A549 (cell line): ENCODE measurements at regions of chr7 and their contacts with region 1.

Region 1: GRCh38 chr7:95545078-95545498 is 51.2 kb downstream of the PDK4 start:
- DNase-seq: peak; percentile 68 to 71
- ATAC-seq: peak; percentile 92 to 95
- H3K4me3 ChIP-seq: peak overlapping the region; percentile 34
- H3K27ac ChIP-seq: peak overlapping the region; percentile 67
- H3K4me1 ChIP-seq: peaks cover 24% of the 10 kb centered on the region
- CTCF ChIP-seq: peak; percentile 70
- EP300 ChIP-seq: no peak
- POLR2A ChIP-seq: no peak
- RAD21 ChIP-seq: peak; percentile 73 to 76

Region 2: DNA sequence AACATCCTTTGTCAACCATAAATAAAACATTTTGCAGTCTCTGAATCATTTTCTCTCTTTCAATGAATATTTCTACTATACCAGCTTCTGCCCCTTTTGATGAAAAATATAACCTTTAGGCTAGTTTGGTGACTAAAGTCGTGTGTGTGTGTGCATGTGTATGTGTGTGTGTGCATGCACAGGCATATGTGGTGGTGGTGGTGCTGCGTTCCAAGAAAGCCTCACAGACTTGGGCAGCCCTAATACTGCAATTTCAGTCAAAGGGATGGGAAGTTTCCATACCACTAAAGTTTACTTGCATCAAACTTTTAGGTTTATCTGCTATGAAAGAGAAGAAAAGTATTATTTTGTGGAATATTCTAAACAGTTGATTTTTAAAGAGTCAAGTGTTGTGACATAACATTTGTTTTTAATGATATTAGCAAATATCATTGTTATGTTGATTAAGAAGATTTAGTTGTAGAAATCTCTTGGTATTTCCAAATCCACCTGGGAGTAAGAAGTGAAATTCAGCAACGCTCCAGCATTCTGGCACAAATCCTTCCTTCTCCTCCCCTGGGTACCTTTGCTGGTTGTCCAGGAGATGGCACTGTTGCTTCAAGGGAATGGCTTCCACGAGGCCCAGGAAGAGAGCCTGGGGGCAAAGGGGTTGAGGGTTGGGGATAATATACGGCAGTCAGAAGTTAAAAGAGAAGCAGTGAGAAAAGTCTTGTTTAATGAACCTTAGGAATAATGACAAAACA is 17.9 kb before region 1 on chr7:
- CTCF ChIA-PET with region 1: interaction called, 36 read pairs
- POLR2A ChIA-PET with region 1: no interaction called
- DNase-seq: peak; percentile 73 to 75
- ATAC-seq: peak; percentile 90 to 95
- H3K4me3 ChIP-seq: no peak overlapping the region
- H3K27ac ChIP-seq: peak overlapping the region; percentile 49 to 72
- H3K4me1 ChIP-seq: peaks cover 21% of the 10 kb centered on the region
- CTCF ChIP-seq: peak; percentile 94
- EP300 ChIP-seq: no peak
- POLR2A ChIP-seq: no peak
- RAD21 ChIP-seq: peak; percentile 97 to 98

Region 3: GRCh38 chr7:95534796-95535195 is 10.3 kb before region 1 on chr7:
- CTCF ChIA-PET with region 1: interaction called, 36 read pairs
- POLR2A ChIA-PET with region 1: no interaction called
- DNase-seq: no peak
- ATAC-seq: no peak
- H3K4me3 ChIP-seq: no peak overlapping the region
- H3K27ac ChIP-seq: no peak overlapping the region
- H3K4me1 ChIP-seq: peaks cover under 1% of the 10 kb centered on the region; the same call in 1 of the 3 replicates
- CTCF ChIP-seq: no peak
- EP300 ChIP-seq: no peak
- POLR2A ChIP-seq: no peak
- RAD21 ChIP-seq: no peak

Region 4: GRCh38 chr7:95558864-95559263 is 13.8 kb after region 1 on chr7:
- CTCF ChIA-PET with region 1: interaction called, 15 read pairs
- POLR2A ChIA-PET with region 1: no interaction called
- DNase-seq: no peak
- ATAC-seq: no peak
- H3K4me3 ChIP-seq: no peak overlapping the region
- H3K27ac ChIP-seq: no peak overlapping the region
- H3K4me1 ChIP-seq: no peaks in the 10 kb centered on the region
- CTCF ChIP-seq: no peak
- EP300 ChIP-seq: no peak
- POLR2A ChIP-seq: no peak
- RAD21 ChIP-seq: no peak

Region 5: DNA sequence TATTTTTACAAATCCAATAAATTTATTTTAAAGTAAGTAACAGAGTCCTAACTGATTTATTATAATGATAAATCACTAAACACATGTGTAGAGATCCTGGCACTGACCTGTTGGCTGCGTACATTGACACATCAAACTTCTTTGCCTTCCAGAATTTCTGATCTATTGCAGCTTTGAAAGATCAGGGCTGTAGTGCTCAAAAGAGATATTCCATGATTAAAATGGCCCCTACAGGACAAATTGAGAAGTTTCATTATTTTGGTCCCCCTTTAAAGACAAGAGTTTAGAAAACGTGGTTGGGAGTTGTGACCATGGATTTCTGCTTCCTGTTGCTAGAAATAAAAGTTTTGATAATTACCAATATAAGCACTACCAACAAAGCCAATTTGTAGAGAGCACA is 138.9 kb after region 1 on chr7:
- CTCF ChIA-PET with region 1: interaction called, 146 read pairs
- POLR2A ChIA-PET with region 1: interaction called, 9 read pairs
- DNase-seq: peak; percentile 18 to 31
- ATAC-seq: peak in 1 of 2 experiments; percentile 56; a peak in 3 of 6 replicates
- H3K4me3 ChIP-seq: no peak overlapping the region
- H3K27ac ChIP-seq: peak overlapping the region; percentile 47 to 58; a peak in 5 of 6 replicates
- H3K4me1 ChIP-seq: peaks cover 13% of the 10 kb centered on the region; the same call in 2 of the 3 replicates
- CTCF ChIP-seq: peak; percentile 32; the same call in 1 of the 3 replicates
- EP300 ChIP-seq: no peak
- POLR2A ChIP-seq: no peak
- RAD21 ChIP-seq: peak; percentile 37 to 42; a peak in 3 of 5 replicates